ENCODE measurements at regions of chr16 and their contacts with region 1.

Region 1: DNA sequence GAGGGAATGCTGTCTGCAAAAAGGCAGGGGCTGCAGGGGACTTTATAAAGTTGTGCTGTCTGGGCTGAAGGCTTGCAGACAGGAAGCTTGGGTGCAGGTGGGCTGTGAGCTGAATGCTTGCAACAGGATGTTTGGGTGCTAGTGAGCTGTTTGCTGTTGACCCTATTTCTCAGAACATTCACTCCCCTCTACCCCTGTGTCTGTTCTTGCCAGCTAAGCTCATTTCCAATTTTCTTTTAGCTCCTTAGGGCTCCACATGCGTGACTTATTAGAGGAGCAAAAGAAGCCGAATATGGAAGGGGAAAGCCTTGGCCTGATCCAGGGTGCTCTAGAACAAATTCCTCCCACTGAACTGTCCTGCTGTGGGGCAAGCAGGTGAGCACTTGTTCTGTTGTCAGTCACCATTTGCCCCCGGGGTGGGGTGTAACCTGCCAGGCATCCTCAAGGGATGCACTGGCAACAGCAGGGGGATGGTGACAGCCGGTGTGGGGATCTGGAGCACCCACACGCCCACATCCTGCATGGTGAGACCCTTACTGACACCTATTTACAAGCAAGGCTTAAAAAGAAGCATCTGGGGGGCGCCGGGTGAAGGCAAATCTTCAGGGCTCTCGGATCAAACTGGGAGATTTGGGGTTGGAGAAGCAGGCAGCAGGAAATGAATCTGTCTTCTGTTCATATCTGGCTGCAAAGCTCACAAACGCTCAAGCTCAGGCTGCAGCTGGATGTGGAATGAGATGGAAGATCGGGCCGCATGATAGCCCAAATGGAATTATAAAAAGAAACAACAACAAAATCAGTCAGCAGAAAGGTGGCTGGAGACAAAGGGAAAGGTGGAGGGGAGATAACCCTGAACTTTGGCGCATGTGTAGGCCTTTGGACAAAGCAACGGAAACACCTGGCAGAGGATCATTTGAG is 21.1 kb upstream of the NUP93 start:
- DNase-seq: no peak
- ATAC-seq: no peak
- H3K4me3 ChIP-seq: no peak overlapping the region
- H3K27ac ChIP-seq: no peak overlapping the region
- H3K4me1 ChIP-seq: no peaks in the 10 kb centered on the region
- H3K27me3 ChIP-seq: no peaks in the 10 kb centered on the region

Region 2: DNA sequence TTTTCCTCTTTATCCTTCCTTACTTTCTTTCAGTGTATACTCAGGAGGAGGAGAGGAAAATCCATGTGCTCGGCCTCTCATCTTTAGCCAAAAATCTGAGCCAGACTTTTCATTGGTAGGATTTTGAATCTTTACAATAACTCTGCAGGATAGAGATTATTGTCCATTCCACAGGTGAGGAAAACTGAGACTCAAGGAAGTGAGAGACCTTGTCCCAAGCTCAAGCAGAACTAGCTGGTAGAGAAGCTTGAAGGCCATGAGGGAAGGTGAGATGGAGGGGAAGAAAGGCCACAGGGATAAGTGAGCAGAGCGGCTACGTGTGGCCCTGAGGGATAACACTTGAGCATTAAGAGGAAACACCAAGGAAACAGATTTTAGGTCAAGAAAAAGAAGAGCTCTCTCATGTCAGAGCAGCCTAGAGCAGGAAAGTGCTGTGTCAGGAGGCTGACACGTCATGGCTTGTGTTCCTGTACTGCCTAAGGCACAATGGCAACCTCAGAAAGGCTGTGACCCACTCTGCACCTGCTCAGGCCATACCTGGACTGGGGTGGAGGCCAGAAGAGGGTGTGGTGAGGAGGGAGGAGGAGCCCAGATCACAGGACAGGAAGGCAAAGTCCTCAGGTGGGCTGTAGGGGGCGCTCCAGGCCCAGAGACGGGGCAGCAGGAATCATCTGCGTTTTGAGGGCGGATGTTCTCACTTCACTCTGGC is 132.0 kb before region 1 on chr16:
- intact Hi-C with region 1: loop called in 1 of 4 experiments (anchors 10 kb)
- DNase-seq: peak; percentile 72 to 87 (median 83)
- ATAC-seq: peak; percentile 85 to 90
- H3K4me3 ChIP-seq: no peak overlapping the region
- H3K27ac ChIP-seq: no peak overlapping the region
- H3K4me1 ChIP-seq: no peaks in the 10 kb centered on the region
- H3K27me3 ChIP-seq: no peaks in the 10 kb centered on the region

Region 3: GRCh38 chr16:56814537-56815432 is 106.0 kb after region 1 on chr16:
- intact Hi-C with region 1: no loop called
- DNase-seq: no peak
- ATAC-seq: peak; percentile 25 to 64
- H3K4me3 ChIP-seq: no peak overlapping the region
- H3K27ac ChIP-seq: no peak overlapping the region
- H3K4me1 ChIP-seq: no peaks in the 10 kb centered on the region
- H3K27me3 ChIP-seq: no peaks in the 10 kb centered on the region

Region 4: DNA sequence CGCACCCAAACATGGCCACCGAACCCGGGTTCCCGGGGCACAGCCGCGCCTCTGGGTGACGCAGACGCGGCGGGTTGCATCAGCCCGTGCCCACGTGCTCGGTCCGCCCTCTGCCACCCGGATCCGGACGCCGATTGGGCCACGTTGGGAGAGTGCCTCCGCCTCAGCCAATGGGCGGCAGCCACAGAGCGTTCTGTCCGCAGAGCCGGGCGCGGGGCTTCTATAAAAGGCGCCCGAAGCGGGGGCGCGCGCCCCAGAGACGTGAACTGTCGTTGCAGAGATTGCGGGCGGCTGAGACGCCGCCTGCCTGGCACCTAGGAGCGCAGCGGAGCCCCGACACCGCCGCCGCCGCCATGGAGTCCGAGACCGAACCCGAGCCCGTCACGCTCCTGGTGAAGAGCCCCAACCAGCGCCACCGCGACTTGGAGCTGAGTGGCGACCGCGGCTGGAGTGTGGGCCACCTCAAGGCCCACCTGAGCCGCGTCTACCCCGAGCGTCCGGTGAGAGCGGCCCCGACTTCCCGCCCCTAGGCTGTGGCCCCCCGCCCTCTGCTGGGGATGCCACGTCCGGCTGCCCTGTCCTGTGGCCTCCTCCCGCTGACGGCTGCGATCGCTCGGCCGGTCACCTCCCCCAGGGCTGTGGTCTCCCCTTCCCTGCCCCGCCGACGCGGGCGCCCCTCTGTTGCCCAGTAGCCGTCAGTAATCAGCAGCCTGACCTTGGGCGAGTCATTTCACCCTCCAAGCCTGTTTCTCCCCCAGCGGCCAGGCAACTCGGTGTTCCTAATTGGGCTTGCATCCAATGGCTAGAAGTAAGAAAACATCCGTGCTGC is 223.3 kb after region 1 on chr16 and contains the start of gene HERPUD1:
- intact Hi-C with region 1: no loop called
- DNase-seq: peak; percentile 99 to 100 (median 100)
- ATAC-seq: peak; percentile 97 to 98
- H3K4me3 ChIP-seq: peak within 1 kb of the TSS; percentile 76
- H3K27ac ChIP-seq: peak within 1 kb of the TSS; percentile 87
- H3K4me1 ChIP-seq: no peaks in the 10 kb centered on the region
- H3K27me3 ChIP-seq: no peaks in the 10 kb centered on the region
- total RNA-seq, gene HERPUD1: 98.6 to 126 (median 118) TPM

Measured in right cardiac atrium (tissue), 5 donors.